ENCODE measurements at regions of chr3 and their contacts with region 1.

Region 1: GRCh38 chr3:44624749-44625480 is at the start of gene ZNF197:
- DNase-seq: peak; percentile 95
- total RNA-seq, gene ZNF197: 14.0 to 14.3 TPM

Region 2: GRCh38 chr3:44499149-44499898 is 125.6 kb before region 1 on chr3:
- intact Hi-C with region 1: no loop called
- DNase-seq: no peak

Region 3: DNA sequence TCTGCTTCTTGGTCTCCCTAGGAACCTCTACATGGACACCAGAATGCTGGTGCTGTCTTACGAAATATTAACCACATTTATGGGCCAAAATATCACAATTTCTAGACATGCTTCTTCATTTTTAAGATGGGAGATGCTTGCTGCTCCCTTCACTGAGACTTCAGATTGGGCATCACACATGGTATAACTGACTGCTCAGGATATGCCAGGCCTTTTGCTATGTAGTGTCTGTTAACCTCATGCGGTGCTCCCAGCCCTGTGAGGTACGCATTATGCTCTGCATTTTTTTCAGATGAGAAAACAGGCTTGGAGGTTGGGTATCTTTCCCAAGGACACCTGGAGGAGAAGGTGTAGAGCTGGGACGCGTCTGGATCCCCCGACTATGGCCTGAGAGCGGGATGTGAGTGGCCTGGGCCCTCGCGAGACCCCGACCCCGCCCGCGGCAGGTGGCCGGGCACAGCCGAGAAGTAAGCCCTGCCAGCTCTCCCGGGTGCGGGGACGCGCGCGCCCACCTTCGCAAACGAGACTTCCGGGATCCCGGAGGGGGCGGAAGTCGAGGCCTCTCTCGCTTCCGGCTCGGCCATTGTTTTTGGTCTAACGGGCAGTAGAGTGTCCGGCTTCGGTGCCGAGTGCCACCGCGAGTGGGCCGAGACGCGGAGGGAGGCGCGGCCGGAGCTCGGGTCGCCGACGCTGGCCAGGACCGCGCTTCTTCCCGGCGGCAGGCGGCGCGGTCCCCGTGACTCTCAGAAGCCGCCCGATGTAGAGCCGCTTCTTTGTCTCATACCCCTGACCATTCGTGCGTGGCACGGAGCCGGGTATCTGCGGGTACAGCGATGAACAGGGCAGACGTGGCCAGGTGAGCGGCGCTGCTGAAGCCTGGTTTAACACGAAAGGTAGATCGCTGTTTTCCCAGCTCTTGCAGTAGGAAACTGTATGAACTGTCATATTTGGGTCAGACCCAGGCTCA is 70.0 kb before region 1 on chr3 and contains the start of gene ZKSCAN7:
- intact Hi-C with region 1: loop called in 1 of 2 experiments (anchors 10 kb)
- DNase-seq: peak; percentile 86
- total RNA-seq, gene ZKSCAN7: 2.3 to 3.9 TPM

Measured in posterior vena cava (tissue), 2 donors.